ENCODE measurements at regions of chr1 and their contacts with region 1.

Region 1: GRCh38 chr1:244450597-244451538 is 841 bp downstream of the ADSS2 start:
- DNase-seq: no peak
- H3K4me3 ChIP-seq: peak overlapping the region; percentile 87 to 94 (median 89)
- H3K27ac ChIP-seq: peak overlapping the region; percentile 70
- H3K4me1 ChIP-seq: peaks cover 2 to 30% (median 22%) of the 10 kb centered on the region in 4 experiments; a peak in 4 of 7 replicates
- H3K27me3 ChIP-seq: no peaks in the 10 kb centered on the region
- CTCF ChIP-seq: no peak
- EP300 ChIP-seq: no peak
- POLR2A ChIP-seq: no peak
- RAD21 ChIP-seq: no peak

Region 2: GRCh38 chr1:244311784-244312532 is 138.9 kb before region 1 on chr1:
- CTCF ChIA-PET with region 1: no interaction called
- POLR2A ChIA-PET with region 1: no interaction called
- DNase-seq: no peak
- H3K4me3 ChIP-seq: no peak overlapping the region
- H3K27ac ChIP-seq: no peak overlapping the region
- H3K4me1 ChIP-seq: no peaks in the 10 kb centered on the region
- H3K27me3 ChIP-seq: no peaks in the 10 kb centered on the region
- CTCF ChIP-seq: no peak
- EP300 ChIP-seq: no peak
- POLR2A ChIP-seq: no peak
- RAD21 ChIP-seq: no peak

Region 3: GRCh38 chr1:244461245-244462071 is 10.6 kb after region 1 on chr1 and contains the start of gene CATSPERE:
- CTCF ChIA-PET with region 1: no interaction called
- POLR2A ChIA-PET with region 1: interaction called, 11 read pairs
- DNase-seq: peak; percentile 73 to 89
- H3K4me3 ChIP-seq: peak within 1 kb of the TSS; percentile 59 to 72 (median 68)
- H3K27ac ChIP-seq: peak within 1 kb of the TSS; percentile 90
- H3K4me1 ChIP-seq: peaks cover 0 to 4% (median 1%) of the 10 kb centered on the region in 4 experiments; a peak in 3 of 7 replicates
- H3K27me3 ChIP-seq: no peaks in the 10 kb centered on the region
- CTCF ChIP-seq: no peak
- EP300 ChIP-seq: 0 out of 3 replicates have a peak, but pooled peaks of 1 of the 2 experiments have one; percentile 13
- POLR2A ChIP-seq: peak; percentile 85 to 96
- RAD21 ChIP-seq: 0 out of 4 replicates have a peak, but pooled peaks of 1 of the 2 experiments have one; percentile 0
- total RNA-seq, gene CATSPERE: 0.27 and 0.45 TPM in 2 replicates

Measured in H1 (cell line).